ENCODE measurements at regions of chr1 and their contacts with region 1.

Region 1: GRCh38 chr1:1206376-1207260 is at the start of gene TNFRSF18:
- DNase-seq: peak; percentile 76
- H3K4me3 Mint-ChIP-seq: peak within 1 kb of the TSS; percentile 84
- H3K27ac Mint-ChIP-seq: peak within 1 kb of the TSS; percentile 100
- H3K4me1 Mint-ChIP-seq: peaks cover 31% of the 10 kb centered on the region
- H3K27me3 Mint-ChIP-seq: no peaks in the 10 kb centered on the region
- total RNA-seq, gene TNFRSF18: 375 to 387 TPM

Region 2: GRCh38 chr1:1137256-1138045 is 69.2 kb before region 1 on chr1:
- CTCF ChIA-PET with region 1: no interaction called
- POLR2A ChIA-PET with region 1: no interaction called
- intact Hi-C with region 1: loop called (anchors 1 kb)
- DNase-seq: peak; percentile 82
- H3K4me3 Mint-ChIP-seq: no peak overlapping the region
- H3K27ac Mint-ChIP-seq: peak overlapping the region; percentile 72
- H3K4me1 Mint-ChIP-seq: peaks cover 12% of the 10 kb centered on the region
- H3K27me3 Mint-ChIP-seq: no peaks in the 10 kb centered on the region

Measured in activated CD4-positive, alpha-beta memory T cell treated with anti-CD3 and anti-CD28 coated beads for 36 hours (primary cell).